GM12878 (cell line): ENCODE measurements at regions of chr18 and their contacts with region 1.

Region 1: GRCh38 chr18:58761241-58761969 is 90.1 kb downstream of the MALT1 start:
- DNase-seq: peak; percentile 84
- ATAC-seq: peak; percentile 83
- H3K4me3 ChIP-seq: no peak overlapping the region
- H3K27ac ChIP-seq: peak overlapping the region; percentile 78
- H3K4me1 ChIP-seq: peaks cover 24% of the 10 kb centered on the region
- H3K27me3 ChIP-seq: no peaks in the 10 kb centered on the region; a peak in 2 of 4 replicates
- CTCF ChIP-seq: no peak
- EP300 ChIP-seq: peak; percentile 35 to 62; a peak in 3 of 4 replicates
- POLR2A ChIP-seq: no peak
- RAD21 ChIP-seq: peak; percentile 27; the same call in 1 of the 2 replicates

Region 2: DNA sequence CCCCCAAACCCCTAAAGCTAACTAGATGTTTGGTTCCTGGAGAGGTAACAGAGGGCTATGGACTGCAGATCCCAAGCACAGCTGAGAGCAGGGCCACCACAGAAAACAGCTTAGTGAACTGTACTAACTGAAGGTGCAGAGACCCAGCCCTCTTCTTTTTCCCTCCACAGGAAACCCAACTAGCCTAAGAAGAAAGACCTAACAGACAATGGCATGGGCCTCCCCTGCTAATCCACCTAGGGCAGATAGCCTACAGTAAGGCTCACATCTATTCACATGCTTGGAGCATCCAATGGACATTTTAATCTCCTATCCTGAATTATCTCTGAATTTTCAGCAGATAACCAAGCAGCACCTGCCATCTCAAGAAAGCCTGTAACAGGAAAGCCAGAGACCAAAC is 1166.1 kb before region 1 on chr18:
- CTCF ChIA-PET with region 1: no interaction called
- POLR2A ChIA-PET with region 1: no interaction called
- RAD21 ChIA-PET with region 1: no interaction called
- SMC1A ChIA-PET with region 1: no interaction called
- in situ Hi-C with region 1: no loop called
- intact Hi-C with region 1: no loop called
- DNase-seq: no peak
- ATAC-seq: no peak
- H3K4me3 ChIP-seq: no peak overlapping the region
- H3K27ac ChIP-seq: no peak overlapping the region
- H3K4me1 ChIP-seq: no peaks in the 10 kb centered on the region
- H3K27me3 ChIP-seq: no peaks in the 10 kb centered on the region
- CTCF ChIP-seq: no peak
- EP300 ChIP-seq: no peak
- POLR2A ChIP-seq: no peak
- RAD21 ChIP-seq: no peak

Region 3: DNA sequence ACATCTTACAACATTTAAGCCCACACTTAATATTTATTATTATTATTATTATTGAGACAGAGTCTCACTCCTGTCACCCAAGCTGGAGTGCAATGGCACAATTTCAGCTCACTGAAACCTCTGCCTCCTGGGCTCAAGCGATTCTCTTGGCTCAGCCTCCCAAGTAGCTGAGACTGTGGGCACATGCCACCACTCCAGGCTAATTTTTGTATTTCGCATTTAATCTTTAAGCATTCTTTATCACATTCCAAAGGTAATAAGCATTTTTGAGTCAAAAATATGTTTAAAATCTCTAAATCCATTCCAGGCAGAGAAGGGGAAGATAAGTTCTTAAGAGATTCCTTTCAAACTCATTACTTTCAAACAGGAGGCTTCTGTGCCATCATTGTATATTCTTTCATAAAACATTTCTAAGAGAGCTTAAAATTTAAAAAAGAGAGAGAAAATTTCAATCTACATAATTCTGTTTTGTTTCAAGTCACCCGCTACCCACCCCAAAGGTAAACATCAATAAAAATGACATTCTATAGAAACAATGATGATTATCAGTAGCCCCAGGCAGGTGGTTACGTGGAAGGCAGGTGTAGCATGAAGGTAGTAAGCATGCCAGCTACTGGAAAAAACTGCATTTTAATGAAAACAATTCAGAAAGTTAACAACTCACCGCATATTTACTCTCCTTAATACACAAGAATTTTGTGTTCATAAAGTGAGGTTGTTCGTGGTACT is 1055.4 kb before region 1 on chr18:
- CTCF ChIA-PET with region 1: no interaction called
- POLR2A ChIA-PET with region 1: no interaction called
- RAD21 ChIA-PET with region 1: no interaction called
- SMC1A ChIA-PET with region 1: no interaction called
- in situ Hi-C with region 1: no loop called
- intact Hi-C with region 1: no loop called
- DNase-seq: no peak
- ATAC-seq: no peak
- H3K4me3 ChIP-seq: no peak overlapping the region
- H3K27ac ChIP-seq: no peak overlapping the region
- H3K4me1 ChIP-seq: no peaks in the 10 kb centered on the region
- H3K27me3 ChIP-seq: no peaks in the 10 kb centered on the region
- CTCF ChIP-seq: no peak
- EP300 ChIP-seq: no peak
- POLR2A ChIP-seq: no peak
- RAD21 ChIP-seq: no peak

Region 4: DNA sequence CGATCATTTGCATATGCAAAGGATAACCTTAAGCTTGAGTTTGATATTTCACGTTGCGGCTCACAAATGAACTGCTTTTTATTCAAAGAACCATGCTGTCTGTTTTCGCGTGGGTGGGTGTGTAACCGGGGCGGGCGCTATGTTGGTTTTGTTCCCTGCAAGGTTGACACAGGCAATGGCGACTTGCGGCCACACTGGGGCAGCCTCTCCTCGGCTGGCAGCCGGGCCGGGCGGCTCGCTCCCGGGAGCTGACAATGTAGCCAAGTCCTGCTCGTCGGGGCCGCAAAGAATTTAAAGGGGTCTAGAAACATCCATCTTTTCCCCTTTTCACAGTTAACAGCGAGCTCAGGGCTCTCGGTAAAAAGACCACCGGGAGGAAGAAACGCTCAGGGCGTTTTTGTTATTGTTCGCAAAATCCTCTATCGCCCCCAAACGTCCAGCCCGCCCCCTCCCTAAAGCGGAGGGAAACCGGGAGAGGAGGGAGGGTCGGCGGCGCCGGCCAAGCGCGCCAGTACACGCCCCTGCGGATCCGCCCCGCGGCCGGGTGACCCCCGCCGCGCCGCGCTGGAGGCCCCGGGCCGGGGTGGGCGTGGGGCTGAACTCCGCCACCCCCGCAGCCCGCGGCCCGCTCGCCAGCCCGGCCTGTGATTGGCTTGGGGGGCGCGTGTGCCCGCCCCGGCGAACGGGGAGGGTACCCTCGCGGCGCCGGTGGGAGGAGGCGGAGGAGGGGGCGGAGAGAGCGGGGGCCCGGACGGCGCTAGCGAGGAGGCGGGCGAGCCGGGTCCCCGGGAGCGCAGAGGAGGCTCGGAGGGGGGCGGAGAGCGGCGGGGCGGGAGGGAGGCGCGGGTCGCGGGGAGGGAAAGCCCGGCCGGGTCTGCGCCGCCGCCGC is 717.7 kb before region 1 on chr18 and contains the start of gene NEDD4L:
- CTCF ChIA-PET with region 1: no interaction called
- POLR2A ChIA-PET with region 1: no interaction called
- RAD21 ChIA-PET with region 1: no interaction called
- SMC1A ChIA-PET with region 1: no interaction called
- in situ Hi-C with region 1: no loop called
- intact Hi-C with region 1: loop called (anchors 5 kb)
- DNase-seq: peak; percentile 53
- ATAC-seq: peak; percentile 83
- H3K4me3 ChIP-seq: peak within 1 kb of the TSS; percentile 96
- H3K27ac ChIP-seq: peak within 1 kb of the TSS; percentile 37
- H3K4me1 ChIP-seq: peaks cover 6% of the 10 kb centered on the region; the same call in 1 of the 2 replicates
- H3K27me3 ChIP-seq: no peaks in the 10 kb centered on the region
- CTCF ChIP-seq: peak; percentile 80 to 91 (median 90)
- EP300 ChIP-seq: 0 out of 4 replicates have a peak, but pooled peaks of 1 of the 2 experiments have one; percentile 15
- POLR2A ChIP-seq: no peak
- RAD21 ChIP-seq: peak; percentile 83
- polyA plus RNA-seq, gene NEDD4L: 7.4 to 8.8 TPM

Region 5: DNA sequence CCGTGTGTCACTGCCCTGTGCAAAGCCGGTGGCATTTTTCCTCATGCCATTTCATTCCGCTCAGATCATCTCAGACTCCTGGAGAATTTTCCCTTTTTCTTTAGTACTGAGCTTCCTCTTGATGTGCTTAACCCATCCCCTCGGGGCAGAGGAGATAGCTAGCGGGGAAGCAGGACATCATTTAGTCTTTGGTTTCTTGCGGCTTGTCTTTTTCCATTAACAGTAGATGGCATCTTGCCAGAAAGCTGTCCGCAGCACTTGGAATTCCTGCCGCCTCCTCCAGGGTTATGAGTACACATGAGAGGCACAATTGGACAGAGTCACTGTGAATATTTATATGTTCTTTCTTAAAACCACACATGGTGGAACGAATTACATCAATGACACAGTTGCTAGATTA is 359.2 kb before region 1 on chr18:
- CTCF ChIA-PET with region 1: interaction called, 32 read pairs
- POLR2A ChIA-PET with region 1: no interaction called
- RAD21 ChIA-PET with region 1: interaction called, 13 read pairs
- SMC1A ChIA-PET with region 1: interaction called, 11 read pairs
- in situ Hi-C with region 1: no loop called
- intact Hi-C with region 1: loop called (anchors 1 kb)
- DNase-seq: no peak
- ATAC-seq: no peak
- H3K4me3 ChIP-seq: no peak overlapping the region
- H3K27ac ChIP-seq: no peak overlapping the region
- H3K4me1 ChIP-seq: peaks cover 11% of the 10 kb centered on the region; the same call in 1 of the 2 replicates
- H3K27me3 ChIP-seq: no peaks in the 10 kb centered on the region
- CTCF ChIP-seq: no peak
- EP300 ChIP-seq: no peak
- POLR2A ChIP-seq: no peak
- RAD21 ChIP-seq: no peak

Region 6: GRCh38 chr18:58515175-58515775 is 246.1 kb before region 1 on chr18:
- CTCF ChIA-PET with region 1: interaction called, 52 read pairs
- POLR2A ChIA-PET with region 1: no interaction called
- RAD21 ChIA-PET with region 1: interaction called, 7 read pairs
- SMC1A ChIA-PET with region 1: interaction called, 20 read pairs
- in situ Hi-C with region 1: no loop called
- intact Hi-C with region 1: no loop called
- DNase-seq: no peak
- ATAC-seq: no peak
- H3K4me3 ChIP-seq: no peak overlapping the region
- H3K27ac ChIP-seq: no peak overlapping the region
- H3K4me1 ChIP-seq: no peaks in the 10 kb centered on the region
- H3K27me3 ChIP-seq: no peaks in the 10 kb centered on the region
- CTCF ChIP-seq: no peak
- EP300 ChIP-seq: no peak
- POLR2A ChIP-seq: no peak
- RAD21 ChIP-seq: no peak

Region 7: DNA sequence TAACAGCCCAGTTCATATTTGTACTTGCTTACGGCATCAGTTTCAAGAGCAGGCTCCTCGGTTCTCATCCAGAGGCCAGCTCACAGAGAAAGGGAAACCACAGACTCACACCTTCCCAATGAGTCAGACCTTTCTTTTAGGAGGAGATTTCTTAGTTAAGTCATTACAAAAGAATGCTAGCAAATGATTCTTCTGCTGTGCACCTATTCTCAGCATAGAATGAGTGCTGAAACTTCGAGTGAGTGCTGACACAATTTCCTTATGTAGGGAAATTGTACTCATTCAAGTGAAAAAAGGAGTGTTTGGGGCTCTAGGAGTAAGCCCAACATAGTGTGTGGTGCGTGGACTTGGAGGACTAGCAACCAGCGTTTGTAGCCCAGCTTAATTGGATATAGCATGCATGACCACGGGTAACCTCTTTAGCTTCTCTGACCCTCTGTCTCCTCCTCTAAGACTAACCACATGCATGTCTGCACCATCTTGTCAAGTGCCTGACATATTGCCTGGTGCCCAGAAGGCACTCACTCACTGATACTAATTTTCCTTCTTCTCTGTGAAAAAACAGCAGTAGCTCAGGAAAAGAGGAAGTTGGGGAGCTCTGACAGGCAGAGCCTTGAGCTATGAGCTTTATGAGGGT is 219.5 kb before region 1 on chr18:
- CTCF ChIA-PET with region 1: interaction called, 743 read pairs
- POLR2A ChIA-PET with region 1: interaction called, 4 read pairs
- RAD21 ChIA-PET with region 1: interaction called, 44 read pairs
- SMC1A ChIA-PET with region 1: interaction called, 629 read pairs
- in situ Hi-C with region 1: no loop called
- intact Hi-C with region 1: no loop called
- DNase-seq: peak; percentile 91
- ATAC-seq: peak; percentile 52
- H3K4me3 ChIP-seq: no peak overlapping the region
- H3K27ac ChIP-seq: peak overlapping the region; percentile 100
- H3K4me1 ChIP-seq: peaks cover 62% of the 10 kb centered on the region
- H3K27me3 ChIP-seq: no peaks in the 10 kb centered on the region
- CTCF ChIP-seq: no peak
- EP300 ChIP-seq: peak; percentile 75 to 91; a peak in 3 of 4 replicates
- POLR2A ChIP-seq: no peak
- RAD21 ChIP-seq: peak; percentile 24; the same call in 1 of the 2 replicates

Region 8: GRCh38 chr18:58661423-58661822 is 100.0 kb before region 1 on chr18:
- CTCF ChIA-PET with region 1: interaction called, 38 read pairs
- POLR2A ChIA-PET with region 1: no interaction called
- RAD21 ChIA-PET with region 1: interaction called, 7 read pairs
- SMC1A ChIA-PET with region 1: interaction called, 18 read pairs
- in situ Hi-C with region 1: no loop called
- intact Hi-C with region 1: no loop called
- DNase-seq: no peak
- ATAC-seq: no peak
- H3K4me3 ChIP-seq: peak overlapping the region; percentile 28; the same call in 1 of the 2 replicates
- H3K27ac ChIP-seq: peak overlapping the region; percentile 45; the same call in 1 of the 2 replicates
- H3K4me1 ChIP-seq: peaks cover 36% of the 10 kb centered on the region
- H3K27me3 ChIP-seq: no peaks in the 10 kb centered on the region
- CTCF ChIP-seq: peak; percentile 4 to 36 (median 20); a peak in 4 of 6 replicates
- EP300 ChIP-seq: no peak
- POLR2A ChIP-seq: no peak
- RAD21 ChIP-seq: peak; percentile 25; the same call in 1 of the 2 replicates

Region 9: GRCh38 chr18:58687871-58688308 is 73.5 kb before region 1 on chr18:
- CTCF ChIA-PET with region 1: interaction called, 11 read pairs
- POLR2A ChIA-PET with region 1: no interaction called
- RAD21 ChIA-PET with region 1: interaction called, 5 read pairs
- SMC1A ChIA-PET with region 1: interaction called, 5 read pairs
- in situ Hi-C with region 1: no loop called
- intact Hi-C with region 1: no loop called
- DNase-seq: peak; percentile 73
- ATAC-seq: peak; percentile 93
- H3K4me3 ChIP-seq: no peak overlapping the region
- H3K27ac ChIP-seq: peak overlapping the region; percentile 78
- H3K4me1 ChIP-seq: peaks cover 10% of the 10 kb centered on the region
- H3K27me3 ChIP-seq: no peaks in the 10 kb centered on the region
- CTCF ChIP-seq: no peak
- EP300 ChIP-seq: peak in 1 of 2 experiments; percentile 46; a peak in 1 of 4 replicates
- POLR2A ChIP-seq: no peak
- RAD21 ChIP-seq: 0 out of 2 replicates have a peak, but pooled peaks have one; percentile 20

Region 10: GRCh38 chr18:60069145-60069544 is 1307.7 kb after region 1 on chr18:
- CTCF ChIA-PET with region 1: no interaction called
- POLR2A ChIA-PET with region 1: no interaction called
- RAD21 ChIA-PET with region 1: no interaction called
- SMC1A ChIA-PET with region 1: no interaction called
- in situ Hi-C with region 1: no loop called
- intact Hi-C with region 1: no loop called
- DNase-seq: no peak
- ATAC-seq: no peak
- H3K4me3 ChIP-seq: no peak overlapping the region
- H3K27ac ChIP-seq: no peak overlapping the region
- H3K4me1 ChIP-seq: no peaks in the 10 kb centered on the region
- H3K27me3 ChIP-seq: no peaks in the 10 kb centered on the region
- CTCF ChIP-seq: no peak
- EP300 ChIP-seq: no peak
- POLR2A ChIP-seq: no peak
- RAD21 ChIP-seq: no peak